Esophagus squamous epithelium (tissue), 5 donors: ENCODE measurements at regions of chr7 and their contacts with region 1.

Region 1: GRCh38 chr7:12490117-12490688 is 80.3 kb upstream of the SCIN start:
- DNase-seq: no peak
- H3K4me3 ChIP-seq: no peak overlapping the region
- H3K27ac ChIP-seq: no peak overlapping the region
- H3K4me1 ChIP-seq: no peaks in the 10 kb centered on the region
- H3K27me3 ChIP-seq: no peaks in the 10 kb centered on the region
- CTCF ChIP-seq: peak in 5 of 6 experiments; percentile 30 to 57 (median 39)
- POLR2A ChIP-seq: no peak

Region 2: GRCh38 chr7:11737723-11738122 is 752.5 kb before region 1 on chr7:
- intact Hi-C with region 1: no loop called
- DNase-seq: no peak
- H3K4me3 ChIP-seq: no peak overlapping the region
- H3K27ac ChIP-seq: no peak overlapping the region
- H3K4me1 ChIP-seq: no peaks in the 10 kb centered on the region
- H3K27me3 ChIP-seq: no peaks in the 10 kb centered on the region
- CTCF ChIP-seq: no peak
- POLR2A ChIP-seq: no peak

Region 3: GRCh38 chr7:12257582-12257981 is 232.6 kb before region 1 on chr7:
- intact Hi-C with region 1: no loop called
- DNase-seq: no peak
- H3K4me3 ChIP-seq: peak overlapping the region in 1 of 4 donors; percentile 30
- H3K27ac ChIP-seq: peak overlapping the region in 1 of 4 donors; percentile 28
- H3K4me1 ChIP-seq: no peaks in the 10 kb centered on the region
- H3K27me3 ChIP-seq: no peaks in the 10 kb centered on the region
- CTCF ChIP-seq: no peak
- POLR2A ChIP-seq: no peak

Region 4: DNA sequence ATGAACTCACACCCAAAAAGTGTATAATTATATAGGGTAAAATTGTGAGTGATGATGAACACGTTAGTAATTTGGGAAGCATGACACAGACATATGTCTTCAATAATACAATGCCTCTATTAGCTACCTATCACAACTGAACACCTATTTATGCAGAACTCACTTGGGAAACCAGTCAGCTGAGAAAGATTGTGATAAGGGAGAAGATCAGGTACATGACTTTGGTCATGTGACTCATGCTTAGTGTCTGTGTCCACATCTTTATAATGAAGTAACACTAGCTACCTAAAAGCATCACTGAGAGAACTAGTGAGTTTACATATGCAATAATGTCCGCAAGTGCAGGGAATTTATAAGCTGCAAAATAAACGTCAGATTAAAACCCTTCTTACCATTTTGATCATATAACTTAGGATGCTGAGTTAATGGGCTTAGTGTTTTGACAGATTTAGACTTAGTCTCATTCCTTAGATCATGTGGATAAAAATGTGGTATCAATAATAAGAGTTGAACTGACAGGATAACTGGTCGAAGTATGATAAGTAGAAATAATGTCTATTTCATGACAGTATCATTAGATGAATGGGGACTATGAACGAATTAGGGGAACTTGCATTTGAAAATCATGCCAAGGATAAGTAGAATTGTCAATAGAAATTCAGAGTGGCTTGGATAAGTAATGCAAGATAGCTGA is 98.1 kb before region 1 on chr7:
- intact Hi-C with region 1: loop called (anchors 10 kb)
- DNase-seq: no peak
- H3K4me3 ChIP-seq: no peak overlapping the region
- H3K27ac ChIP-seq: no peak overlapping the region
- H3K4me1 ChIP-seq: peaks cover 0 to 5% (median 0%) of the 10 kb centered on the region in 3 donors
- H3K27me3 ChIP-seq: no peaks in the 10 kb centered on the region
- CTCF ChIP-seq: no peak
- POLR2A ChIP-seq: no peak